CD14-positive monocyte (primary cell): ENCODE measurements at regions of chr17 and their contacts with region 1.

Region 1: GRCh38 chr17:8935191-8935590 is 30.3 kb downstream of the PIK3R5 start:
- DNase-seq: peak; percentile 97 to 100 (median 100)
- H3K4me3 ChIP-seq: no peak overlapping the region
- H3K4me3 Mint-ChIP-seq: peak overlapping the region in 1 of 2 donors; percentile 14
- H3K27ac ChIP-seq: peak overlapping the region; percentile 83 to 96
- H3K27ac Mint-ChIP-seq: peak overlapping the region; percentile 94 to 99 (median 98)
- H3K4me1 ChIP-seq: peaks cover 19 to 28% of the 10 kb centered on the region in 2 donors
- H3K4me1 Mint-ChIP-seq: peaks cover 48% of the 10 kb centered on the region
- H3K27me3 ChIP-seq: no peaks in the 10 kb centered on the region
- H3K27me3 Mint-ChIP-seq: no peaks in the 10 kb centered on the region
- CTCF ChIP-seq: no peak

Region 2: GRCh38 chr17:8518326-8518725 is 416.9 kb before region 1 on chr17:
- intact Hi-C with region 1: no loop called
- DNase-seq: no peak
- H3K4me3 ChIP-seq: no peak overlapping the region
- H3K4me3 Mint-ChIP-seq: no peak overlapping the region
- H3K27ac ChIP-seq: no peak overlapping the region
- H3K27ac Mint-ChIP-seq: no peak overlapping the region
- H3K4me1 ChIP-seq: no peaks in the 10 kb centered on the region
- H3K4me1 Mint-ChIP-seq: no peaks in the 10 kb centered on the region
- H3K27me3 ChIP-seq: no peaks in the 10 kb centered on the region
- H3K27me3 Mint-ChIP-seq: no peaks in the 10 kb centered on the region
- CTCF ChIP-seq: no peak

Region 3: GRCh38 chr17:8905331-8905730 is 29.9 kb before region 1 on chr17:
- intact Hi-C with region 1: no loop called
- DNase-seq: peak in 1 of 3 donors; percentile 6
- H3K4me3 ChIP-seq: no peak overlapping the region
- H3K4me3 Mint-ChIP-seq: no peak overlapping the region
- H3K27ac ChIP-seq: peak overlapping the region in 1 of 2 donors; percentile 40
- H3K27ac Mint-ChIP-seq: peak overlapping the region in 5 of 7 donors; percentile 17 to 86 (median 70)
- H3K4me1 ChIP-seq: no peaks in the 10 kb centered on the region
- H3K4me1 Mint-ChIP-seq: peaks cover 7% of the 10 kb centered on the region
- H3K27me3 ChIP-seq: no peaks in the 10 kb centered on the region
- H3K27me3 Mint-ChIP-seq: no peaks in the 10 kb centered on the region
- CTCF ChIP-seq: no peak

Region 4: GRCh38 chr17:8916466-8916865 is 18.7 kb before region 1 on chr17:
- intact Hi-C with region 1: loop called in 1 of 2 experiments (anchors 2 kb)
- DNase-seq: peak; percentile 86 to 94 (median 86)
- H3K4me3 ChIP-seq: peak overlapping the region in 1 of 3 experiments; percentile 26
- H3K4me3 Mint-ChIP-seq: peak overlapping the region; percentile 53 to 70
- H3K27ac ChIP-seq: peak overlapping the region; percentile 86 to 98
- H3K27ac Mint-ChIP-seq: peak overlapping the region; percentile 97 to 100 (median 98)
- H3K4me1 ChIP-seq: peaks cover 23 to 52% of the 10 kb centered on the region in 2 donors
- H3K4me1 Mint-ChIP-seq: peaks cover 45% of the 10 kb centered on the region
- H3K27me3 ChIP-seq: no peaks in the 10 kb centered on the region
- H3K27me3 Mint-ChIP-seq: no peaks in the 10 kb centered on the region
- CTCF ChIP-seq: no peak